Activated T-helper 2 cell treated with anti-CD3 and anti-CD28 coated beads, Interferon-gamma antibody, Interleukin-2, Interleukin-4, amounts not matched to agents 10 μg/mL and 5 μg/mL and 100 μg/mL, durations not matched to agents 14 hours and 24 hours and 36 hours (primary cell): ENCODE measurements at regions of chr14 and their contacts with region 1.

Region 1: DNA sequence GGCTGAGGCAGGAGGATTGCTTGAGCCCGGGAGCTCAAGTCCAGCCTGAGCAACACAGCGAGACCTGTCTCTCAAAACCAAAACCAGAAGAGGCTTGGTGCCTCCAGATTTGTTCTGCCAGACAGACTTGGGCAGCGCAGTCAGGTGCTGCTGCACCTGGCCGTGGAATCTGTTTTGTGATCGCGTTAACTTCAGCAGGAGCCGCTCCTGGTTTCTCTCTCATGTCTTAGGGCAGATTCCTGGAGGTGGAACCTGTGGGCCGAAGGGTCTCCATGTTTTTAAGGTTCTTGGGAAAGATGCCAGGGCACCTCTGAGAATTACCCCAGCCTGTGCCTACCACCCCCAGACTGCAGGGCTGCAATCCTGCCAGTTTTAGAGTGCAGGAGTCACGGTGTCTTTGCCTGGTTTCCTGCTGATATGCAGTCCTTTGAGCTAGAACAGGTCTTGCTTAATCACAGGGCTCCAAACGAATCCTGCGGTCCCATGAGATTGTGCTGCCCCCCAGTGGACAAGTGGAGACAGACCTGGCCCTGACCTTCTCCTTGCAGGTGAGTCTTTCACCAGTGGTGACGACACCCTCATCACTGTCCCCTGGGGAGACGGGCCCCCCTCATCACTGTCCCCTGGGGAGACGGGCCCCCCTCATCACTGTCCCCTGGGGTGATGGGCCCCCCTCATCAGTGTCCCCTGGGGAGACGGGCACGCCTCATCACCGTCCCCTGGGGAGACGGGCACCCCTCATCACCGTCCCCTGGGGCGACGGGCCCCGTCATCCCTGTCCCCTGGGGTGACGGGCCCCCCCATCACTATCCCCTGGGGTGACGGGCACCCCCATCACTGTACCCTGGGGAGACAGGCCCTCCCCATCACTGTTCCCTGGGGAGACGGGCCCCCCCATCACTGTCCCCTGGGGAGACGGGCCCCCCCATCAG is 37.6 kb downstream of the PACS2 start:
- DNase-seq: peak; percentile 81
- H3K4me3 Mint-ChIP-seq: no peak overlapping the region
- H3K27ac Mint-ChIP-seq: no peak overlapping the region
- H3K4me1 Mint-ChIP-seq: peaks cover 2% of the 10 kb centered on the region
- H3K27me3 Mint-ChIP-seq: no peaks in the 10 kb centered on the region

Region 2: DNA sequence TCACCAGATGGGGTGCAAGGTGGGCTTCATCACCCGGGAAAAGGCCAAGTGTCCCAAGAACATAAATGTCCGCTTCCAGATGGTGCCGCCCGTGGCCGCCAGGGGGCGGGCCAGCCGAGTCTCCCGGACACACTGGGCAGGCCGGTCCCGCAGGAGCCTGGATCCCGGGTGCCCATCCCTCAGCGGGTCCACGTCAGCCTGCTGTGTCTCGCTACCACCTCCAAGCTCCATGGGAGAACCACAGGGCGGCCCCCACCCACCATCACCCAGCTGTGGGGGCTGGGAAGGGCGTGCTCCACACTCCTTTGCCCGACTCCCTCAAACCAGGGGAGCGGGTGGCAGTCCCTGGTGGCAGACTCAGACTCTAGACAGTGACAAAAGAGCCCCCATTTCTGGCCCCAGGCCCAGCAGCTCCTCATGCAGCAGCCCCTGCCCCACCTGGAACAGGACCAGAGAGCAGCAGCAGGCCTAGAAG is 149.1 kb before region 1 on chr14:
- intact Hi-C with region 1: loop called (anchors 1 kb)
- DNase-seq: peak; percentile 49
- H3K4me3 Mint-ChIP-seq: no peak overlapping the region
- H3K27ac Mint-ChIP-seq: no peak overlapping the region
- H3K4me1 Mint-ChIP-seq: peaks cover 6% of the 10 kb centered on the region
- H3K27me3 Mint-ChIP-seq: peaks cover 6% of the 10 kb centered on the region

Region 3: GRCh38 chr14:105294142-105294597 is 58.0 kb before region 1 on chr14:
- intact Hi-C with region 1: loop called (anchors 1 kb)
- DNase-seq: peak; percentile 73
- H3K4me3 Mint-ChIP-seq: peak overlapping the region; percentile 45
- H3K27ac Mint-ChIP-seq: peak overlapping the region; percentile 96
- H3K4me1 Mint-ChIP-seq: peaks cover 35% of the 10 kb centered on the region
- H3K27me3 Mint-ChIP-seq: no peaks in the 10 kb centered on the region